ENCODE measurements at regions of chr13 and their contacts with region 1.

Region 1: GRCh38 chr13:111474136-111475002 is 153.9 kb downstream of the TEX29 start:
- DNase-seq: peak in 1 of 3 donors; percentile 39
- ATAC-seq: peak; percentile 25 to 35
- H3K4me3 ChIP-seq: no peak overlapping the region
- H3K27ac ChIP-seq: no peak overlapping the region
- H3K4me1 ChIP-seq: no peaks in the 10 kb centered on the region
- H3K27me3 ChIP-seq: no peaks in the 10 kb centered on the region

Region 2: DNA sequence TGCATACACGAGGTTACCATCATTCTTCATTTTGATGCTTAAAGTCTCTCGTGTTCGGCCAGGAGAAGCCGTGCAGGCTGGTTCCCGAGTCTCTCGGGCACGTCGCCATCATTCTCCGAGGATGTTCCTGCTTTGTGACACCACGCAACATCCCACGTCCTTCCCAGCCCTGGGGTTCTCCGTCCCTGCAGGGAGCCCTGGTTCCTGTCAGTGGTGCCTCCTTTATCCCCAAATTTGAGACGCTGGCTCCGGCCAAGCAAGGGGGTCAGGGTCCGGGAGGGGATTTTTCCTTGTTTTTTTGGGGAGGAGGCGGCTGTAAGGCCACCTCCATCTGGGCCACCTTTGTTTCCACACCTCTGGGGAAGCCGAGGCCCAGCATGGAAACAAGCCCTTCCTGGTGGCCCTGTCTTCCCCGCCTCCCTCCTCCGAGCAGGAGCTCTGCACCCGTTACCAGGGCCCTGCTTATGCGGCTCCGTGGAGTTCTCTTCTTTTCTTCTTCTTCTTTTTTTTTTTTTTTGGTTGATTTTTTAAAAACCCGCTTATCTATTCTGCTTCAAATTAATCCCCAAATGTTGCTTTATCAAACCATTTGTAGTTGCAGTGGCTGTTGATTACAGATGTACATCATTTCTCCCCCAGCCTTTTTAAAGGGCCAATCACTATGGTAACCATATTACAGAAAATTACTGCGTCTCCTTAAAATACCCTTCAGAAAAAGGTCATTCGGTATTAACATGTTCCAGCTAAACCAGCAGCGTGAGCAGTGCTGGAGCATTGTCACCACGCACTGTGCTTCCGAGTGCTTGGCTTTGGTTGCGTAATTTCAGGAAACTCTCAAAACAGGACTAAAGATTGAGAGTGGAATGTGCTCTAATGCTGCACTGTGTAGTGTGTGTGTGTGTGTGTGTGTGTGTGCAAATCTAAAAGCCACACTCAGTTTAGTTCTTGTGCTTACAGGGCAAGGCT is 103.5 kb before region 1 on chr13:
- intact Hi-C with region 1: no loop called
- DNase-seq: no peak
- ATAC-seq: no peak
- H3K4me3 ChIP-seq: no peak overlapping the region
- H3K27ac ChIP-seq: no peak overlapping the region
- H3K4me1 ChIP-seq: no peaks in the 10 kb centered on the region
- H3K27me3 ChIP-seq: no peaks in the 10 kb centered on the region

Region 3: GRCh38 chr13:112443995-112444860 is 969.9 kb after region 1 on chr13:
- intact Hi-C with region 1: loop called (anchors 1 to 5 kb)
- DNase-seq: peak; percentile 48 to 76 (median 75)
- ATAC-seq: peak; percentile 59 to 75
- H3K4me3 ChIP-seq: no peak overlapping the region
- H3K27ac ChIP-seq: no peak overlapping the region
- H3K4me1 ChIP-seq: no peaks in the 10 kb centered on the region
- H3K27me3 ChIP-seq: no peaks in the 10 kb centered on the region

Region 4: GRCh38 chr13:112606109-112607001 is 1132.0 kb after region 1 on chr13:
- intact Hi-C with region 1: loop called in 3 of 4 experiments (anchors 5 to 10 kb)
- DNase-seq: peak; percentile 94 to 98 (median 98)
- ATAC-seq: peak; percentile 100
- H3K4me3 ChIP-seq: peak overlapping the region; percentile 67
- H3K27ac ChIP-seq: no peak overlapping the region
- H3K4me1 ChIP-seq: no peaks in the 10 kb centered on the region
- H3K27me3 ChIP-seq: no peaks in the 10 kb centered on the region

Region 5: DNA sequence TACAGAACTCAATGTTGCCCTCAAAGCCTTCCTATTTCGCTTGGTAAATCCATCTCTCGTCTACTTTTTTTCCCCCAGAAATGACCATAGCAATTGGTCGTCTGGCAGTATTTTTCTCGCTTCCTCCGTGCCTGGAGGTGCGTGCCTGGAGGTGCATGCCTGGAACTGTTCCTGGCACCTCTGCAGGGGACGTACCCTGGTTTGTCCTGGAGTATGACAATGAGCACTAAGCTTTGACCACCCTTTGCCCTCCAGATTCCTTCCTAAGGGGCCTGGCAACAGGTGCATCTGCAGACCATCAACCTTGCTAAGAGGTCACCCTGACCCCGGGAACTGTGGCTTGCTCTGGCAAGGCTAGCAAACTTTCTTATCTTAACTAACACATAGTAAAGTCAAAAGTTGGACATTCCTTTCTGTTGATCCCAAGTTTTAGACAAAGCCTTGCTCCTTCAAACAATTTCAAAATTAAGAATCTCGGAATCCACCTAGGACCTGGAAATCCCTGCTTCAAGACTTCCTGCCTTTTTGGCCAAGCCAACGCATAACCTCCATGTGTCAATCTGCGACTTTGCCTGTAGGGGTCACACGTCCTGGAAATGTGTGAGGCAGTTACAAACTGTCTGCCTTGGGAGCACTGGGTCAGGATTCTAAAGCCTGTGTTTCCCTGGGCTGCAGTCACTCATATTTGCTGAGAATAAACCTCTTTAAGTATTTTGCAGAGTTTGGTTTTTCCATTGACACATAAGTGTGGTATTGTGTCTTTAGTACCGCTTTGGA is 1142.4 kb after region 1 on chr13:
- intact Hi-C with region 1: loop called in 1 of 4 experiments (anchors 10 kb)
- DNase-seq: peak in 1 of 3 donors; percentile 52
- ATAC-seq: peak; percentile 60 to 73
- H3K4me3 ChIP-seq: no peak overlapping the region
- H3K27ac ChIP-seq: no peak overlapping the region
- H3K4me1 ChIP-seq: no peaks in the 10 kb centered on the region
- H3K27me3 ChIP-seq: no peaks in the 10 kb centered on the region

Measured in right cardiac atrium (tissue), 5 donors.